ENCODE measurements at regions of chr15 and their contacts with region 1.

Region 1: DNA sequence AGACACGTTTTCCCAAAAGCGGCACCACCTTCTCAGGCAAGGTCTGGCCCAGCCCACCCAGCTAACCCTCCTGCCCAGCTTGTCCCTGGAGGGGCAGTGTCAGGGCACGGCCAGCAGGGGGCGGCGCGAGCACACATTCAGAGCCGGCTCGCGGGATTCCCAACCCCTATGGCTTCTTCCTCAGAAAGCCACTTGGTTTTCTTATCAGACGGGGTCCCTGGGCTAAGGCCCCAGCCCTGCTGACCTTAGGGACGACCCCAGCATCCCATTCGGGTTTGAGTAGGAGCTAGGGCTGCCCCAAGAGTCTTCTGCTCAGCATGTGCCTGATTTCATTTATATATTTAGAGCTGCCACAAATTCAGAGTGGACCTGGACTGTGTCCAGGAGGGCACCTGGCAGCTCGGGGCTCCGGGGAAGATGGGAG is 14.5 kb downstream of the RLBP1 start:
- DNase-seq: no peak
- ATAC-seq: peak; percentile 98
- H3K4me3 ChIP-seq: no peak overlapping the region
- H3K27ac ChIP-seq: no peak overlapping the region
- H3K4me1 ChIP-seq: no peaks in the 10 kb centered on the region
- H3K27me3 ChIP-seq: no peaks in the 10 kb centered on the region
- CTCF ChIP-seq: peak; percentile 96 to 99 (median 99); a peak in 5 of 6 replicates
- EP300 ChIP-seq: no peak
- POLR2A ChIP-seq: no peak
- RAD21 ChIP-seq: peak; percentile 87

Region 2: GRCh38 chr15:88061452-88061851 is 1145.5 kb before region 1 on chr15:
- CTCF ChIA-PET with region 1: no interaction called
- POLR2A ChIA-PET with region 1: no interaction called
- RAD21 ChIA-PET with region 1: no interaction called
- SMC1A ChIA-PET with region 1: no interaction called
- in situ Hi-C with region 1: no loop called
- intact Hi-C with region 1: no loop called
- DNase-seq: no peak
- ATAC-seq: no peak
- H3K4me3 ChIP-seq: no peak overlapping the region
- H3K27ac ChIP-seq: no peak overlapping the region
- H3K4me1 ChIP-seq: no peaks in the 10 kb centered on the region
- H3K27me3 ChIP-seq: no peaks in the 10 kb centered on the region
- CTCF ChIP-seq: no peak
- EP300 ChIP-seq: no peak
- POLR2A ChIP-seq: no peak
- RAD21 ChIP-seq: no peak

Region 3: GRCh38 chr15:89057504-89058133 is 149.3 kb before region 1 on chr15:
- CTCF ChIA-PET with region 1: interaction called, 14 read pairs
- POLR2A ChIA-PET with region 1: no interaction called
- RAD21 ChIA-PET with region 1: interaction called, 6 read pairs
- SMC1A ChIA-PET with region 1: no interaction called
- in situ Hi-C with region 1: no loop called
- intact Hi-C with region 1: no loop called
- DNase-seq: peak; percentile 15
- ATAC-seq: peak; percentile 99
- H3K4me3 ChIP-seq: no peak overlapping the region
- H3K27ac ChIP-seq: no peak overlapping the region
- H3K4me1 ChIP-seq: no peaks in the 10 kb centered on the region
- H3K27me3 ChIP-seq: no peaks in the 10 kb centered on the region; a peak in 1 of 4 replicates
- CTCF ChIP-seq: peak; percentile 97 to 99 (median 99)
- EP300 ChIP-seq: no peak
- POLR2A ChIP-seq: no peak
- RAD21 ChIP-seq: peak; percentile 98

Region 4: DNA sequence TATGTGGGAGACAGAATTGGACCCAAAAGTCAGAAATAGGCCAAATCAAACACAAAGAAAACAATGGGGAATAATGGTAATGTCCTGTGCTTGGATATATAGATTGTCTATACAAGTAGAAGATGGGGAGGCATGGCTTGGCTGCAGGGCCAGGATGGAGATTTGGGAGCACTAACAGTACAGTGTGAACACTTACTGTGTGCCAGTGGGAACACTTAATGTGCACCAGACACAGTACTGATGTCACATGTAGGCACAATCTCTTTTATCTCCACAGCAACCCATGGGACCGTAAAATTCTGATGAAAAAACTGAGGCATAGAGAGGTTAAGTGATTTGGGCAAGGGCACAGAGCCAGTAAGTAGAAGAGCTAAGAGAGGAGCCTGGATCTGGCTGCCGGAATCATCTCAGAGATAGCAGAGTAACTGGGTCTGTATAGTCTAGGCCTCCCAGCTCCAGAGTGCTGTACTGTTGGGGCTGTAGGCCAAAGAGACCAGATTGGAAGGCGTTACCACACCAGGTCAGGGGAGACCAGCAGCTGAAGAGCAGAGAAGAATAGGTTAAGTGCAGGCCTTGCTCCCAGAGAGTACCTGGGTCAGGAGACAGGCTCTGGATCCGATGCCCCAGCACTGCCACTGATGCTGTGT is 48.9 kb before region 1 on chr15:
- CTCF ChIA-PET with region 1: no interaction called
- POLR2A ChIA-PET with region 1: no interaction called
- RAD21 ChIA-PET with region 1: no interaction called
- SMC1A ChIA-PET with region 1: no interaction called
- in situ Hi-C with region 1: no loop called
- intact Hi-C with region 1: no loop called
- DNase-seq: no peak
- ATAC-seq: no peak
- H3K4me3 ChIP-seq: no peak overlapping the region
- H3K27ac ChIP-seq: no peak overlapping the region
- H3K4me1 ChIP-seq: no peaks in the 10 kb centered on the region
- H3K27me3 ChIP-seq: no peaks in the 10 kb centered on the region
- CTCF ChIP-seq: no peak
- EP300 ChIP-seq: no peak
- POLR2A ChIP-seq: no peak
- RAD21 ChIP-seq: no peak

Region 5: DNA sequence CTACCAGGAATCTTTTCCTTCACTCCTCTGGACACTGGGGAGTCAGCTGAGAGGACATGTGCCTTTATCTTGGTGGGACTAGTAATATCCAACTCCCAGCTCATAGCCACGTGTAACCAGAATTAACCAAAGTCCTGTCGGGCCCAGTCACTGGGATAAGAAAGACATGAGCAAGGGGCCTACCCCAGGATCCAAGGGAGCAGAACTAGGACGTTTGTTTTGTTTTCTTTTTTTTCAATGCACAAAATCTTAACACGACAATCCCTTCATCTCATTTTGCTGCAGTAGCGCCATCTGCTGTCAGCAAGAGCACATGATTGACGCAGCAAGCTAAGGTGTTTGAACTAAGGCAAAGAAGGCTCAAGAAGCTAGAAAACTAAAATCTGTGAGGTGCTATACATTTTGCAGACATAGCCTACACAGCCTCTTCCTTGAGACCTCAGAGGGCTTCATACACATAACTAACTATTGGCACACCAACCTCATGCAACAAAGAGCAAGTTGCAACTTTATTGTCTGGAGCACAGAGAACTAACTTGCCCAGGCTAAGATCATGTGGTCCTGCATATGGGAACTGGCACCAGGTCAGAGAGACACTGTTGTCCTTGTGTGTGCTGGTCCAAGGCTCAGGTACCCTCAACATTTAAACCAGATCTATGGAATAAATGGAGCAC is 29.1 kb before region 1 on chr15:
- CTCF ChIA-PET with region 1: interaction called, 15 read pairs
- POLR2A ChIA-PET with region 1: no interaction called
- RAD21 ChIA-PET with region 1: interaction called, 7 read pairs
- SMC1A ChIA-PET with region 1: interaction called, 3 read pairs
- in situ Hi-C with region 1: no loop called
- intact Hi-C with region 1: no loop called
- DNase-seq: peak; percentile 15
- ATAC-seq: peak; percentile 76
- H3K4me3 ChIP-seq: no peak overlapping the region
- H3K27ac ChIP-seq: no peak overlapping the region
- H3K4me1 ChIP-seq: peaks cover 7% of the 10 kb centered on the region; the same call in 1 of the 2 replicates
- H3K27me3 ChIP-seq: no peaks in the 10 kb centered on the region
- CTCF ChIP-seq: peak; percentile 76 to 92 (median 87); a peak in 5 of 6 replicates
- EP300 ChIP-seq: no peak
- POLR2A ChIP-seq: no peak
- RAD21 ChIP-seq: peak; percentile 88

Region 6: DNA sequence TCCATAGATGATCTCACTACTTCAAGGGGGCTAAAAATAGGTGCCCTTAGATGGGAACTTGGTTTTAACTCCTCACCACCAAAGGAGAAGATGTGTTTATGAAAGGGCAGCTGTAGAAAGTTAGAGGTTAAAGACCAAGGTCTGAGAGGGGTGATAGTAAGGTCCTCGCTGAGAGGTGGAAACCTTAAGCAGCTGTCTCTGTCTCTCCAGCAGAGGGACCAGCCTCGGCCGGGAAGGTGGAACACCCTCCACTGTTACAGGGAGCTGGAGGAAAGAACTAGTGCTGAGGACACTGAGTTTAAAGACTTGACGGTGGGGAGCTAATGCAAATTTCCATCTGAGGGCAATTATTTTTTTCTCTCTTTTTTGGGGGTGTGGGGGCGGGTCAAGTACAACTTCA is 23.4 kb after region 1 on chr15:
- CTCF ChIA-PET with region 1: interaction called, 12 read pairs
- POLR2A ChIA-PET with region 1: no interaction called
- RAD21 ChIA-PET with region 1: no interaction called
- SMC1A ChIA-PET with region 1: no interaction called
- in situ Hi-C with region 1: no loop called
- intact Hi-C with region 1: no loop called
- DNase-seq: no peak
- ATAC-seq: peak; percentile 28; the same call in 1 of the 3 replicates
- H3K4me3 ChIP-seq: no peak overlapping the region
- H3K27ac ChIP-seq: no peak overlapping the region
- H3K4me1 ChIP-seq: no peaks in the 10 kb centered on the region
- H3K27me3 ChIP-seq: no peaks in the 10 kb centered on the region
- CTCF ChIP-seq: no peak
- EP300 ChIP-seq: no peak
- POLR2A ChIP-seq: no peak
- RAD21 ChIP-seq: no peak

Region 7: DNA sequence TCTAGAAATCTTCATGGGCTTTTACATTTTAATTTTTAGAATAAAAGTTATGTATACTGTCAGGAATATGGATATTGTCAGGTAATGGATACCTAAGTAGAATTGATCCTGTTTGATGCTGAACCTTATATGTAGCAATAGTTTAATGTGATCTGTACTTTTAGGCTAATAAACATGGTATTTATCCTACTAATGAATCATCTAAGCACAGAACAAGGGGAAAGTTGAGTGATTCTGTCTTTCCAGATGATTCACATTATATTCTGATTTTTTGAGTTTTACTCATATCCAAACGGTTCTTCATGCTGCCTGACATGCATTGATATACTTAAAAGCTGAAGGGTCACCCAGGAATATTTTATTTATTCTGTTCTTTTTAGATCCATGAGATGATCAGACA is 71.4 kb after region 1 on chr15:
- CTCF ChIA-PET with region 1: interaction called, 19 read pairs
- POLR2A ChIA-PET with region 1: no interaction called
- RAD21 ChIA-PET with region 1: interaction called, 6 read pairs
- SMC1A ChIA-PET with region 1: interaction called, 5 read pairs
- in situ Hi-C with region 1: no loop called
- intact Hi-C with region 1: no loop called
- DNase-seq: no peak
- ATAC-seq: no peak
- H3K4me3 ChIP-seq: no peak overlapping the region
- H3K27ac ChIP-seq: no peak overlapping the region
- H3K4me1 ChIP-seq: no peaks in the 10 kb centered on the region
- H3K27me3 ChIP-seq: no peaks in the 10 kb centered on the region
- CTCF ChIP-seq: no peak
- EP300 ChIP-seq: no peak
- POLR2A ChIP-seq: no peak
- RAD21 ChIP-seq: no peak

Region 8: GRCh38 chr15:89299896-89300295 is 93.0 kb after region 1 on chr15:
- CTCF ChIA-PET with region 1: interaction called, 16 read pairs
- POLR2A ChIA-PET with region 1: no interaction called
- RAD21 ChIA-PET with region 1: interaction called, 3 read pairs
- SMC1A ChIA-PET with region 1: interaction called, 9 read pairs
- in situ Hi-C with region 1: no loop called
- intact Hi-C with region 1: loop called (anchors 10 kb)
- DNase-seq: no peak
- ATAC-seq: no peak
- H3K4me3 ChIP-seq: no peak overlapping the region
- H3K27ac ChIP-seq: no peak overlapping the region
- H3K4me1 ChIP-seq: no peaks in the 10 kb centered on the region
- H3K27me3 ChIP-seq: no peaks in the 10 kb centered on the region
- CTCF ChIP-seq: peak in 2 of 3 experiments; percentile 4 to 28; a peak in 2 of 6 replicates
- EP300 ChIP-seq: no peak
- POLR2A ChIP-seq: no peak
- RAD21 ChIP-seq: peak; percentile 17; the same call in 1 of the 2 replicates

Region 9: DNA sequence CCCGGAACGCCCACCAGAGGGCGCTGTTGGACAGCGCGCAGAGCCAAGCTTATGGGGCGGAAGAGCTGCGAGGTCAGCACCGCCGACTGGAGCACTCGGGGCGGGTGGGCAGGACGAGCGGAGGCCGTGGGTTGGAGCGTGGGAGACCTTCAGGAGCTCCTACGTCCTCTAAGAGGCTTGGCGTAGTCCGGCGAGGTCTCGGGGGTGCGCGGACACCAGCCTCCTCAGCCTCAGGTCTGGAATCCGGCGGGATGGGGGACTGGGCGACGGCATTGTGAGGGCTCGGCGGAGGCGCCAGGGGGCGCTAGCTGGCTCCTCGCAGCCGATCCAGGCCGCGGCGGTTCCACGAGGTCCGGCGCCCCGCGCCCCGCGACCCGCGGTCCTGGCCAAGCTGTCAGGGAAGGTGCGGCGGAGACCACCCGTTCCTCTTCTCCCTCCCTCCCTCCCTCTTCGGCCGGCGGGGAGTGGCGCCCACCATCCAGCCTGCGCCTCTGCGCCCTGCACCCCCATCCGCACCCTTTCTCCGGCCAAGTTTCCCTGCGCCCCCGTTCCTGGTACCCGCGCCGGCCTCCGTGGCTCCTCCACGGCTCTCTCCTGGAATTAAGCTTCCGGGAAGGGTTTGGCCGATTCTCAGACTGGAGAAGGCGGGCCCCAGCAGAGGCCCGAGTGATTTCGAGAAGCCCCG is 152.0 kb after region 1 on chr15:
- CTCF ChIA-PET with region 1: interaction called, 17 read pairs
- POLR2A ChIA-PET with region 1: no interaction called
- RAD21 ChIA-PET with region 1: interaction called, 25 read pairs
- SMC1A ChIA-PET with region 1: interaction called, 10 read pairs
- in situ Hi-C with region 1: no loop called
- intact Hi-C with region 1: no loop called
- DNase-seq: peak; percentile 40
- ATAC-seq: peak; percentile 96
- H3K4me3 ChIP-seq: peak overlapping the region; percentile 67; the same call in 1 of the 2 replicates
- H3K27ac ChIP-seq: no peak overlapping the region
- H3K4me1 ChIP-seq: no peaks in the 10 kb centered on the region
- H3K27me3 ChIP-seq: peaks cover 12 to 35% of the 10 kb centered on the region in 2 experiments
- CTCF ChIP-seq: peak; percentile 82 to 93 (median 89)
- EP300 ChIP-seq: no peak
- POLR2A ChIP-seq: no peak
- RAD21 ChIP-seq: peak; percentile 89

Region 10: DNA sequence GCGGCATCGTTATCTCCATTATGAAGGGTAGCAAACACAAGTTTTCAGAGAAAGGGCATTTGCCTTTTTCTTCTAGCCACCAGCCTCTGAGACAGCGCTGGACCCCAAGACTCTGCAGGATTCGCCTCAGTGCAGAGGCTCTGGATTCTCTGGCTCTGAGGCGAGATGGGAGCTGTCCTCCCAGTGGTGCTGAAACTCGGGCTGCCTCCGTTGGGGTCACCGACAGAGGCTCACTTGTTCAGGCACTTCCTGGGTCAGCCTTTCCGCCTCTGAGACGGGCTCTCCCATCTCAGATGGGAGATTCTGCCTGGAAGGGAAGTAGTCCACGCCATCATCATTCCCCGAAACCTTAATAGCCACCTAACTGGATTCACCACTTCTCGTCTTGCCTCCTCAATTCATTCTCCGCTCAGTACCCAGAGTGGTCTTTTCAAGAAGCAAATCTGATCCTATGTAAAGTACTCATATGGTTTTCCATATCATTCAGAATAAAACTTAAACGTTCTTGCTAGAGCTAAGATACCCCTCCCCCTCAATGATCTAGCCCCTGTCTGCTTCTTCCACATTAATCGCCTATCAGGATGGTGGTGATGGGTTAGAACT is 212.6 kb after region 1 on chr15:
- CTCF ChIA-PET with region 1: no interaction called
- POLR2A ChIA-PET with region 1: no interaction called
- RAD21 ChIA-PET with region 1: no interaction called
- SMC1A ChIA-PET with region 1: no interaction called
- in situ Hi-C with region 1: no loop called
- intact Hi-C with region 1: no loop called
- DNase-seq: no peak
- ATAC-seq: peak; percentile 42; the same call in 2 of the 3 replicates
- H3K4me3 ChIP-seq: no peak overlapping the region
- H3K27ac ChIP-seq: no peak overlapping the region
- H3K4me1 ChIP-seq: no peaks in the 10 kb centered on the region
- H3K27me3 ChIP-seq: peaks cover 2 to 3% of the 10 kb centered on the region in 2 experiments; a peak in 3 of 4 replicates
- CTCF ChIP-seq: no peak
- EP300 ChIP-seq: no peak
- POLR2A ChIP-seq: no peak
- RAD21 ChIP-seq: no peak